ENCODE measurements at regions of chr12 and their contacts with region 1.

Region 1: DNA sequence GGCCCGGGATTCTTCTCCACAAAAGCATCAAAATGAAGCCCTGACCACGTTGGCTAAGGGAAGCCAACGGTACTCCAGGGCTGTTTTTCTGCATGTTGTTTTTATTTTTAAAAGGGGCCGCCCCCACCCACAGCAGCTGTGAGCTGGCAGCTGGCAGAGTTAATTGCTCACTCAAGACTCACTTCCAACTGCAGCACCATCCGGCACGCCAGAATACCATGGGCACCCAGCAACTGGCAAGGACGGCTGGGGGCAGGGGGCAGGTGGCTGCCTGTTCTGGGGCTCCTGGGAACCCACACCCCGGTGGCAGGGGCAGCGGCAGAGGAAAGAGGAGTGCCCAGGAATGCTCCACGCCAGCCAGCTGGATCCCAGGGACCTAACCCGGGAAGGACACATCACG is 44.3 kb downstream of the NCOR2 start:
- DNase-seq: peak in 1 of 2 donors; percentile 60
- H3K4me3 ChIP-seq: no peak overlapping the region
- H3K27ac ChIP-seq: peak overlapping the region; percentile 88 to 97
- H3K4me1 ChIP-seq: peaks cover 23 to 24% of the 10 kb centered on the region in 2 donors
- H3K27me3 ChIP-seq: no peaks in the 10 kb centered on the region
- CTCF ChIP-seq: no peak
- POLR2A ChIP-seq: no peak

Region 2: DNA sequence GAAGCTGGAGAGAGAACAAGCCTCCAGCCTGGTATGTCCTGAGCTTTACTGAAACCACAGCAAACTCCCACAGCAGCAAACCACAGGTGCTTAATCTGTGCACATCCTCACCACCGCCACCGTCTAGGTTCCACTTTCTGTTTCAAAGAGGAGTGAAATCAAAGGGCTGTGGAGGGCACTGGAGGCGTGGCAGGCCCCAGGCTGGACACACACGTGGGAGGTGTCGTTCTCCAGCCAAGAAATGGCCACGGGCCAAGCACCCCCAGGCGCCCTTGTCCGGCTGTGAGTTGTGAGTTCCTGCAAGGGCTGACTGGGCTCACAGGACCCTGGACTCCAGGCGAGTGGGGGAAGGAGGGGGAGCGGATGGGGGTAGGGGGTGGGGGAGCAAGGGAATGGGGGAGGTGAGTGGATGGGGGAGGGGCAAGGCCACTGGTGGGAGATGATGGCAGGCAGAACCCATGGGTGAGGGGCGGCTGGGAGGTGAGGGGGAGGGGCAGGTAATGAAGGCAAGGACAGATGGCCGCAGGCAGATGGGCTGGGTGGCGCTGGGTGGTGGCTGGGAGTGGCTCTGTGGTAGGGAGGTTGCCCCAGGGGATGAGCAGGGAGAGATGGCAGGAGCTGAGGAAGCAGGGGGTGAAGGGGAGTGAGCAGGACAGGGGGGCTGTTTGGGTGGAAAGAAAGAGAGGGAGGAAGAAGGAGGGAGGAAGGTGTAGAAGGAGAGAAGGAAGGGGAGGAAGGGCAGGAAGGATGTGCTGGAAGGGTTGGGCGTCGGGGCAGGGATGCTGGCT is 42.4 kb before region 1 on chr12:
- intact Hi-C with region 1: loop called (anchors 1 kb)
- DNase-seq: peak; percentile 71 to 72
- H3K4me3 ChIP-seq: peak overlapping the region in 1 of 3 donors; percentile 18
- H3K27ac ChIP-seq: peak overlapping the region; percentile 54 to 80
- H3K4me1 ChIP-seq: peaks cover 0 to 19% of the 10 kb centered on the region in 2 donors
- H3K27me3 ChIP-seq: no peaks in the 10 kb centered on the region
- CTCF ChIP-seq: no peak
- POLR2A ChIP-seq: no peak

Region 3: DNA sequence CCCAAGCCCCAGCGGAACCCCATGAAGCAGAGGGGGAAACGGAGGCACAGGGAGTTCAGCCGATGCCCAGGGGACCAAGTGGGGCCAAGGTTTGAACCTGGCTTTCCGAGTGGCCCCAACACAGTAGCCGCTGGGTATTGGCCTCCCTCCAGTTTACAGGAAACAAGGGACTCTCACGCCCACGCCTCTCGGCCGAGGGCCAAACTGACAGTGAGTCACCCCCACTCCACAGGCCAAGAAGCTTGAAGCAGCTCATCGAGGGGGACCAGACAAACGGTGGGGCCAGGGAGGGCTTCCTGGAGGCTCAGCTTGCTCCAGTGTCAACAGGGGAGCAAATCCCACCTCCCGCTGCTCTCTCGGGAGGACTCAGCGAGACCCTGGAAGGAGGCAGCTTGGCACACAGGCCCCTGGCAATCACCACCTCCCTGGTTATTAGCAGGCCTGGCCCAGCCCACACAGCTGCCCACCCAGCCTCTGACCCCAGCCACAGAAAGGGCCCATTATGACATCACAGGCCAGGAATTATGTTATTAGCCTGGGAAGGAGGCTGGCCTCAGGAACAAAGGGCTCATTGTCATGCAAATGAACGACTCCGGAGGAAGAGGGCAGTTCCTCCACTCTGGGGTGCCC is 10.3 kb before region 1 on chr12:
- intact Hi-C with region 1: no loop called
- DNase-seq: peak; percentile 85 to 92
- H3K4me3 ChIP-seq: peak overlapping the region in 1 of 3 donors; percentile 48
- H3K27ac ChIP-seq: peak overlapping the region; percentile 92 to 97
- H3K4me1 ChIP-seq: peaks cover 45 to 69% of the 10 kb centered on the region in 2 donors
- H3K27me3 ChIP-seq: no peaks in the 10 kb centered on the region
- CTCF ChIP-seq: no peak
- POLR2A ChIP-seq: no peak